ENCODE measurements at regions of chr7 and their contacts with region 1.

Region 1: GRCh38 chr7:143214789-143215679 is 6.8 kb upstream of the TAS2R40 start:
- DNase-seq: peak in 4 of 6 donors; percentile 23 to 72 (median 38)
- ATAC-seq: peak; percentile 60 to 100 (median 94)
- H3K4me3 ChIP-seq: no peak overlapping the region
- H3K27ac ChIP-seq: no peak overlapping the region
- H3K4me1 ChIP-seq: no peaks in the 10 kb centered on the region
- H3K27me3 ChIP-seq: no peaks in the 10 kb centered on the region
- CTCF ChIP-seq: peak; percentile 97 to 98 (median 97)

Region 2: GRCh38 chr7:142873281-142873787 is 341.7 kb before region 1 on chr7:
- intact Hi-C with region 1: loop called in 1 of 3 experiments (anchors 10 kb)
- DNase-seq: peak in 1 of 6 donors; percentile 63
- ATAC-seq: peak; percentile 33 to 67 (median 47)
- H3K4me3 ChIP-seq: no peak overlapping the region
- H3K27ac ChIP-seq: no peak overlapping the region
- H3K4me1 ChIP-seq: no peaks in the 10 kb centered on the region
- H3K27me3 ChIP-seq: no peaks in the 10 kb centered on the region
- CTCF ChIP-seq: peak; percentile 10 to 29 (median 26)

Region 3: GRCh38 chr7:142960955-142961512 is 254.0 kb before region 1 on chr7:
- intact Hi-C with region 1: no loop called
- DNase-seq: no peak
- ATAC-seq: no peak
- H3K4me3 ChIP-seq: no peak overlapping the region
- H3K27ac ChIP-seq: no peak overlapping the region
- H3K4me1 ChIP-seq: peaks cover 0 to 7% (median 0%) of the 10 kb centered on the region in 3 donors
- H3K27me3 ChIP-seq: no peaks in the 10 kb centered on the region
- CTCF ChIP-seq: no peak

Region 4: GRCh38 chr7:143008007-143008901 is 206.8 kb before region 1 on chr7:
- intact Hi-C with region 1: loop called (anchors 2 to 10 kb)
- DNase-seq: peak; percentile 59 to 94 (median 85)
- ATAC-seq: peak; percentile 85 to 97 (median 96)
- H3K4me3 ChIP-seq: no peak overlapping the region
- H3K27ac ChIP-seq: no peak overlapping the region
- H3K4me1 ChIP-seq: no peaks in the 10 kb centered on the region
- H3K27me3 ChIP-seq: no peaks in the 10 kb centered on the region
- CTCF ChIP-seq: peak; percentile 87 to 95 (median 94)

Region 5: DNA sequence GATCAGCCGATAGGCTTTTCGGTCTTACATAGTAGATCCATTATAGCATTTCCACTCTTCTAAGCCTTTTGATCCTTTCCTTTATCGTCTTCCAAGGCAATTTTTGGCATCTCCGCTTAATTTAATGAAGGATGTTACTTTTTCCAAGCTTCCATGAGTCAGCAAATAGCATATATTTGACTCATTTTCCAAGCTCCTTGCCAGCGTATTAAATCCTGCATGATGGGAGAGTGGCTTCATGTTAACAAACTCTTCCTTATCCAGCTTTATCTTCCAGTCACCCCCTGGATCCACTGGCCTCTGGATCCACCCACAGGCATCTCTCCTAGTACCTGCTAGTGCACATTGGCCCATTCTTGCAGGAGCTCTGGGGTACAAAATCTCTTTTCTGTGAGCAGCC is 201.1 kb before region 1 on chr7:
- intact Hi-C with region 1: loop called in 2 of 3 experiments (anchors 5 to 10 kb)
- DNase-seq: no peak
- ATAC-seq: peak in 2 of 4 donors; percentile 25 to 35
- H3K4me3 ChIP-seq: no peak overlapping the region
- H3K27ac ChIP-seq: no peak overlapping the region
- H3K4me1 ChIP-seq: no peaks in the 10 kb centered on the region
- H3K27me3 ChIP-seq: no peaks in the 10 kb centered on the region
- CTCF ChIP-seq: no peak

Region 6: DNA sequence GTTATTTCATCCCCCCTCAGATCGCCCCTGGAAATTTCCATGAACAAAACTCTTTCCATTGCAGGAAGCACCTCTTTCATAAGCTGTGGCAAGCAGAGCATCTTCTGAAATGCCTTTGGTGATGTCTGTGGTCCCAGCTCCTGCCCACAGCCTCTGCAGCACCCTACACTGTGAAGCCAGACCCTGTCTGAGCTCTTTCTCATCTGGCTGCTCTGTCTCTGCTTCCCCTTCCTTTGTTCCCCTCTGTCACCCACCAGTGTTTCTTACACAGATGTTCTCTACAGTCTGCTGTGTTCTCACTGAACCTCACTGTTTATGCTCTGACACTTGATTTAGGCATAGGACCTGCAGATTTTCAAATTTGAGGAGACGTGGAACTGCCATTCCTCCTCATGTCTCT is 33.7 kb before region 1 on chr7:
- intact Hi-C with region 1: no loop called
- DNase-seq: no peak
- ATAC-seq: no peak
- H3K4me3 ChIP-seq: no peak overlapping the region
- H3K27ac ChIP-seq: no peak overlapping the region
- H3K4me1 ChIP-seq: no peaks in the 10 kb centered on the region
- H3K27me3 ChIP-seq: no peaks in the 10 kb centered on the region
- CTCF ChIP-seq: no peak